Activated CD4-positive, alpha-beta T cell treated with anti-CD3 and anti-CD28 coated beads for 36 hours (primary cell): ENCODE measurements at regions of chr4 and their contacts with region 1.

Region 1: DNA sequence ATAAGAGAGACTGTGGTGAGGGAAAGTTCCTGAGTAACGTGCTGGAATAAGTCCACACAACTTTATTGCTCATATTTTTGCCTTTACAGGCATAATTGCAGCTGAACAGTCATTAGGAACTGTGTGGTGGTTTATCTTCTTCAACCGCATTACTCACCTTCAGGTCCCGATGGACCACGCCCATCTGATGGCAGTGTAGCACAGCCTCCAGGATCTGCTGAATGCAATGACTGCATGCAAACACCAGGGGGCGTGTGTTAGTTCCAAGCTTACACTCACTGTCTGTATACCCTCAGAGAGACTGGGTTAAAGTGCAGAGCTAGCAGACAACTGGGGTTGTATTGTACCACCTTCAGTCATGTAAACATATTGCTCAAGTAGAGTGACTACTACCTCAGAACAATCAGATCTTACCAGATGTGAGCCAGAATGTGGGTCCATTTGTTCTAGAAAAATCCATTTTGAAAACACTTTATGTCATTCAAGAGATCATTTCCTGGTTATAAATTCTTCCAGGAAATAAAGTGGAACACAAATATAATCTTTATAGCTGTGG is 214.0 kb downstream of the CAMK2D start:
- DNase-seq: peak; percentile 95
- ATAC-seq: peak; percentile 99
- H3K4me3 Mint-ChIP-seq: no peak overlapping the region
- H3K27ac Mint-ChIP-seq: peak overlapping the region; percentile 49
- H3K4me1 Mint-ChIP-seq: peaks cover 24% of the 10 kb centered on the region
- H3K27me3 Mint-ChIP-seq: no peaks in the 10 kb centered on the region

Region 2: DNA sequence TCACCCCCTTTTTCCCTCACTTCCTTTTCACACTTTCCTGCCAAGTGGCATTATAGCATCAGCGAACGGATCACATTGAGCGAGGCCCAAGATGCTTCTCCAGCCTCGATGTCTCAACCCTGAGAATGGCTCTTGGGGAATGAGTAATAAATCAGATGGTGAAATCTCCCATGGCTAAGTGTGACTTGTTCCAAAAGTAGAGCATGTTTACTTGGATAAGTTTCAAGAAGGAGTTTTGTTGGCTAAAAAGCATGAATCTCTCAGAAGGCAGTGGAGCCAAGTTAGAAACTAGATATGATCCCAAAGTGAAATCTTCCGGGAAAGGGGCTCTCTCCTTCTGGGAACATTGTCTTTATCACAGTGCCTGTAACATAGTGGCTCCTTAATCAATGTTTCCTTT is 102.3 kb before region 1 on chr4:
- CTCF ChIA-PET with region 1: no interaction called
- POLR2A ChIA-PET with region 1: no interaction called
- intact Hi-C with region 1: loop called in 1 of 2 experiments (anchors 5 kb)
- DNase-seq: no peak
- ATAC-seq: no peak
- H3K4me3 Mint-ChIP-seq: no peak overlapping the region
- H3K27ac Mint-ChIP-seq: peak overlapping the region; percentile 85
- H3K4me1 Mint-ChIP-seq: peaks cover 27% of the 10 kb centered on the region
- H3K27me3 Mint-ChIP-seq: no peaks in the 10 kb centered on the region

Region 3: DNA sequence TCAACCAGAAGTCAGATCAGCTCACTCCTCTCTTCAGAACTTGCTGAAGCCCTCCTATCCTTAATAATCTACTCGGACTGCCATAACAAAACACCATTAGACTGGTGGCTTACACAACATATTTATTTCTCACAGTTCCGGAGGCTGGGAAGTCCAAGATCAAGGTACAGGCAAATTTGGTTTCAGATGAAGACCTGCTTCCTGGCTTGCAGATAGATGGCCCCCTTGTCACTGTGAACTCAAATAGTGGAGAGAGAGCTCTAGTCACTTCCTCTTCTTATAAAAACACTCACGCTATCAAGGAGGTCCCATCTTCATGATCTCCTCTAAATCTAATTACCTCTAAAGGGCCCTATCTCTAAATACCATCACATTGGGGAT is 88.9 kb after region 1 on chr4:
- CTCF ChIA-PET with region 1: no interaction called
- POLR2A ChIA-PET with region 1: no interaction called
- intact Hi-C with region 1: loop called in 1 of 2 experiments (anchors 10 kb)
- DNase-seq: no peak
- ATAC-seq: peak; percentile 52
- H3K4me3 Mint-ChIP-seq: peak overlapping the region; percentile 29
- H3K27ac Mint-ChIP-seq: peak overlapping the region; percentile 72
- H3K4me1 Mint-ChIP-seq: peaks cover 49% of the 10 kb centered on the region
- H3K27me3 Mint-ChIP-seq: no peaks in the 10 kb centered on the region

Region 4: DNA sequence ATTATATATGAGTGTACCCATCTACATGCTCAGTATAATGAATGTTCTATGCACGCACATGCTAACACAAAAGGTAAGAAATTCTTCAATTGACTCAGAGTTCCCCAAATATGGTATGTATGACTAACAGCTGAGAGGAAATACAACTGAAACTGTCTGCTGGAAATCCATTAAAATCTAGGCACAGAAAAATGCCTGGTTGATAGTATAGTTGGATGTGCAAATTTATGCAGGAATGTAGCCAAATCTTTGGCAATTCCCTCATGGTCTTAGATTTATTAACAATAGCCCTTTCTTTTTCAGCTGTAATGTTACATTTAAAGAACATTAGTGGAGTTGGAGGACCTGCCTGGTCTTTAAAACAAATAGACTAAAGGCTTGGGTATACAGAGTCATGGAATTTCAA is 208.4 kb after region 1 on chr4:
- CTCF ChIA-PET with region 1: interaction called, 10 read pairs
- POLR2A ChIA-PET with region 1: interaction called, 4 read pairs
- intact Hi-C with region 1: loop called in 1 of 2 experiments (anchors 1 kb)
- DNase-seq: no peak
- ATAC-seq: peak; percentile 78
- H3K4me3 Mint-ChIP-seq: peak overlapping the region; percentile 28
- H3K27ac Mint-ChIP-seq: peak overlapping the region; percentile 79
- H3K4me1 Mint-ChIP-seq: peaks cover 48% of the 10 kb centered on the region
- H3K27me3 Mint-ChIP-seq: no peaks in the 10 kb centered on the region

Region 5: DNA sequence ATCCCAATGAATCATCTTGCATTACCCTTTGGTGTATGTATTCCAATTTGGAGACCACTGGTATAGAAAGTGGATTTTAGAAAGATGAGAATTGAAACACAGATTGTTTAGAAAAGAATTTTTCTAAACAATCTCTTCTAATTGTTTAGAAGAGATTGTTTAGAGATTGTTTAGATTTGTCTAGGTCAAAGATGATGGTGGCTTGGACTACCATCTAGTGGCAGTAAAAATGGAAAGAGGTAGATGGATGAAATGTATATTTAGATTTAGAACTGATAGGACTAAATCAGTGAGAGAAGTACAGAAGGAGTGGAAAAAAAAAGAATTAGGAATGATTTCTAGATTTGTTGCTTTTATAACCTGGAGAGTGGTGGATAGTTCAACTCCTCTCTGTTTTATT is 361.3 kb after region 1 on chr4:
- CTCF ChIA-PET with region 1: no interaction called
- POLR2A ChIA-PET with region 1: no interaction called
- intact Hi-C with region 1: loop called in 1 of 2 experiments (anchors 2 kb)
- DNase-seq: no peak
- ATAC-seq: no peak
- H3K4me3 Mint-ChIP-seq: no peak overlapping the region
- H3K27ac Mint-ChIP-seq: no peak overlapping the region
- H3K4me1 Mint-ChIP-seq: peaks cover 24% of the 10 kb centered on the region
- H3K27me3 Mint-ChIP-seq: no peaks in the 10 kb centered on the region